SK-N-SH (cell line): ENCODE measurements at regions of chr22 and their contacts with region 1.

Region 1: GRCh38 chr22:33018232-33018864 is 39.8 kb downstream of the SYN3 start:
- DNase-seq: peak; percentile 80
- H3K4me3 ChIP-seq: no peak overlapping the region; a peak in 1 of 4 replicates
- H3K27ac ChIP-seq: no peak overlapping the region
- H3K4me1 ChIP-seq: no peaks in the 10 kb centered on the region
- H3K27me3 ChIP-seq: no peaks in the 10 kb centered on the region
- CTCF ChIP-seq: peak; percentile 83
- EP300 ChIP-seq: no peak
- RAD21 ChIP-seq: peak; percentile 87

Region 2: GRCh38 chr22:33000342-33001280 is 17.7 kb before region 1 on chr22:
- CTCF ChIA-PET with region 1: interaction called, 27 read pairs
- POLR2A ChIA-PET with region 1: no interaction called
- DNase-seq: peak; percentile 82
- H3K4me3 ChIP-seq: no peak overlapping the region; a peak in 1 of 4 replicates
- H3K27ac ChIP-seq: no peak overlapping the region
- H3K4me1 ChIP-seq: no peaks in the 10 kb centered on the region; a peak in 1 of 4 replicates
- H3K27me3 ChIP-seq: no peaks in the 10 kb centered on the region
- CTCF ChIP-seq: peak; percentile 84
- EP300 ChIP-seq: no peak
- RAD21 ChIP-seq: peak; percentile 94

Region 3: GRCh38 chr22:33057363-33057995 is 39.1 kb after region 1 on chr22:
- CTCF ChIA-PET with region 1: interaction called, 411 read pairs
- POLR2A ChIA-PET with region 1: no interaction called
- DNase-seq: no peak
- H3K4me3 ChIP-seq: peak overlapping the region in 1 of 2 experiments; percentile 46; a peak in 2 of 4 replicates
- H3K27ac ChIP-seq: no peak overlapping the region
- H3K4me1 ChIP-seq: peaks cover 0 to 2% of the 10 kb centered on the region in 2 experiments; a peak in 1 of 4 replicates
- H3K27me3 ChIP-seq: no peaks in the 10 kb centered on the region; the same call in 1 of the 2 replicates
- CTCF ChIP-seq: no peak
- EP300 ChIP-seq: no peak
- RAD21 ChIP-seq: no peak

Region 4: DNA sequence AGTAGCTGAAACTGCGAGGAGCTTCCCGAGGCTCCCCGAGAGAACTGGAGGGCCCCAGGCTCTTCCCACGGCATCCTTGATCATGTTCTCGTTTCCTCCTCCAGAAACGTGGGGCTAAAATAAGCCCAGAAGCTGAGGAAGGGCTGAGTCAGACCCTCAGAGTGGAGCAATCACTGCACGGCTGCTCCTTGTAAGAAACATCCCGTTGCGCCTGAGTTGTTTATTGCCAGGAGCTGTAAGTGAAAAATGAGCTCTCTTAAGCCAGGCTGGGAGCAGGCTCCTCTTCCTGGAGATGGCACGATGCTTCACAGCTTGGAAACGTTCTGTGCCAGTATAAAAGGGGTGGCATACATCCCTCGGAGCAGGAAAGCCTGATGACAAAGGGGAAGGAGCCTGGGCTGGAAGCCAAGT is 87.2 kb after region 1 on chr22:
- CTCF ChIA-PET with region 1: interaction called, 12 read pairs
- POLR2A ChIA-PET with region 1: no interaction called
- DNase-seq: no peak
- H3K4me3 ChIP-seq: no peak overlapping the region
- H3K27ac ChIP-seq: no peak overlapping the region
- H3K4me1 ChIP-seq: peaks cover 0 to 9% of the 10 kb centered on the region in 2 experiments; a peak in 1 of 4 replicates
- H3K27me3 ChIP-seq: no peaks in the 10 kb centered on the region
- CTCF ChIP-seq: no peak
- EP300 ChIP-seq: no peak
- RAD21 ChIP-seq: no peak

Region 5: GRCh38 chr22:33139937-33140336 is 121.6 kb after region 1 on chr22:
- CTCF ChIA-PET with region 1: interaction called, 16 read pairs
- POLR2A ChIA-PET with region 1: no interaction called
- DNase-seq: no peak
- H3K4me3 ChIP-seq: no peak overlapping the region
- H3K27ac ChIP-seq: no peak overlapping the region
- H3K4me1 ChIP-seq: no peaks in the 10 kb centered on the region
- H3K27me3 ChIP-seq: no peaks in the 10 kb centered on the region
- CTCF ChIP-seq: no peak
- EP300 ChIP-seq: no peak
- RAD21 ChIP-seq: no peak